Mammary epithelial cell (primary cell): ENCODE measurements at regions of chr7 and their contacts with region 1.

Region 1: GRCh38 chr7:135801045-135801693 is 52.6 kb upstream of the FAM180A start:
- DNase-seq: peak; percentile 51
- H3K4me3 ChIP-seq: no peak overlapping the region
- H3K27ac ChIP-seq: no peak overlapping the region
- H3K4me1 ChIP-seq: peaks cover 11% of the 10 kb centered on the region
- H3K27me3 ChIP-seq: no peaks in the 10 kb centered on the region
- CTCF ChIP-seq: peak; percentile 86 to 87

Region 2: DNA sequence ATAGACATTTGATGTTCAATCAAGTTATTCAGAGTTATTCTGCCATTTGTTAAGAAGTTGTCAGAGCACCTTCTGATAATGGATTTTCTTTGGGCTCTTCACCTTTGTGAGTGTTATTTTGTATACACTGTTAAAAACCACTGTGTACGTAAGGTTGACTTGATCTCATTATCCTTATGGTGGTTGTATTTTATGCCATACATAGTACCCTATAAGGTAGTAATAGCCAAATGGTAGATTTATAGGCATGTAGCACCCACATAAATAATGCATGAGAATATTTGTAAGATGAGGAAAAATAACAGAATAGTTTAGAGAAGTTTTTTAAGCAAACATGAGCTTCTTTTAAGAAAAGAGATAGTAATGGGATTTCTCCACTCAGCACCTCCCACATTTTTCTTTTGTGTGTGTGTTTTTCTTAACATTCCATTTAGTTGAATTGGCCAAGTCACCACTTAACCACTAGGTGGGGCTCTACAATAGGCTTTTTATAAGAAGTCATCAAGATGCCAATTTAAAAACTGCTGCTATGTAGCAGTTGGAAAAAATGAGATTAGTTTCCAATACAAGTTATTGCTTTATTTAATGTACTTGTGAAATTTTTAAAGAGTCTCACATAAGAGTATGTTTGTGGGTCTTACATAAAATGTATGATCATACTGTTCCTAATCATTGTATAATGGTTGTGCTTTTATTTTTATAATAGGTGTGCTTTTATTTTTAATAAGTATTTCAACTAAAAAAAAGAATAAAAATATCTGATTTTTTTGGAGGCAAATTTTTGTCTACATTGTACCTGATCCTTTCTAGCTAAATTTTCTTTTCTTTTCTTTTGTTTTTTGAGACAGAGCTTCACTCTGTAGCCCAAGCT is 180.0 kb before region 1 on chr7:
- CTCF ChIA-PET with region 1: no interaction called
- dilution Hi-C with region 1: no loop called
- in situ Hi-C with region 1: no loop called
- intact Hi-C with region 1: loop called (anchors 1 kb)
- DNase-seq: peak; percentile 73
- H3K4me3 ChIP-seq: no peak overlapping the region
- H3K27ac ChIP-seq: peak overlapping the region; percentile 57
- H3K4me1 ChIP-seq: no peaks in the 10 kb centered on the region
- H3K27me3 ChIP-seq: no peaks in the 10 kb centered on the region
- CTCF ChIP-seq: peak; percentile 80 to 90

Region 3: DNA sequence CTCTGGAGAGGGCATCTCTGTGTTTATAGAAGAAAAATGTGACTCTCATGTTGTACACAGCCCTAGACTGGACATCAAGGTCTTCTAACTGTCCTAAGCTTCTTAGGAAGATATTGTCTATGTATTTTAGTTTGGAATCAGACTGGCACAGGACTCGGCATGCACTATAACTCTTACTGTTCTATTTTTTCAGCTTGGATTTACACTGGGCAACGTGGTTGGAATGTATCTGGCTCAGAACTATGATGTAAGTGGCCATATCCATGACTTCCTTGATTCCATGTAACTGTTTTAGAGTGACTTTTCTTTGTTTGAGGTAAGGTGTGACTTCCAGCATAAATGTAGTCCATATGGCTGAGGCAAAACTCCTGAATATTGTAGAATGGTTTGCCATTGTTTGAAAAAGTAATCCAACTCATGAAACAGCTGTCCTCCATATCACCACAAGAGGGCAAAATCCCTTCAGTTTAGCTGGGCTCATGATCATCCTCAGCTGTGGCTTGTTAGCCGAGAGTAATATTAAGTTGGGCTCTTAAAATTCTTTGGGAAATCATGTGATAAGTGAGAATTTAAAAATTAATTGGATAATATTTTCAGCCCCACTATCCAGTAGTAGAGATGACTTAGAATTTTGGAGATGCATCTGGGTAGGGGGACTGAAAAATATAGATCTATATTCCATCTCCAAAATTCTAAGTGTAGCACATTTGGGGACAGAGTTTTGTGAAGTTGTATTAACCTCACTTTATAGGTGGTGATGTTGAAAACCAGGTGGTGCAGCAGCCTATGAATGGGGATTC is 128.4 kb before region 1 on chr7:
- CTCF ChIA-PET with region 1: interaction called, 4 read pairs
- dilution Hi-C with region 1: no loop called
- in situ Hi-C with region 1: loop called in 1 of 2 experiments (anchors 5 kb)
- intact Hi-C with region 1: loop called (anchors 1 kb)
- DNase-seq: peak; percentile 61
- H3K4me3 ChIP-seq: no peak overlapping the region
- H3K27ac ChIP-seq: peak overlapping the region; percentile 42
- H3K4me1 ChIP-seq: peaks cover 41% of the 10 kb centered on the region
- H3K27me3 ChIP-seq: no peaks in the 10 kb centered on the region
- CTCF ChIP-seq: peak; percentile 84 to 87

Region 4: GRCh38 chr7:135920478-135920877 is 119.3 kb after region 1 on chr7:
- CTCF ChIA-PET with region 1: no interaction called
- dilution Hi-C with region 1: no loop called
- in situ Hi-C with region 1: no loop called
- intact Hi-C with region 1: loop called (anchors 5 kb)
- DNase-seq: no peak
- H3K4me3 ChIP-seq: no peak overlapping the region
- H3K27ac ChIP-seq: no peak overlapping the region
- H3K4me1 ChIP-seq: peaks cover 23% of the 10 kb centered on the region
- H3K27me3 ChIP-seq: no peaks in the 10 kb centered on the region
- CTCF ChIP-seq: no peak

Region 5: DNA sequence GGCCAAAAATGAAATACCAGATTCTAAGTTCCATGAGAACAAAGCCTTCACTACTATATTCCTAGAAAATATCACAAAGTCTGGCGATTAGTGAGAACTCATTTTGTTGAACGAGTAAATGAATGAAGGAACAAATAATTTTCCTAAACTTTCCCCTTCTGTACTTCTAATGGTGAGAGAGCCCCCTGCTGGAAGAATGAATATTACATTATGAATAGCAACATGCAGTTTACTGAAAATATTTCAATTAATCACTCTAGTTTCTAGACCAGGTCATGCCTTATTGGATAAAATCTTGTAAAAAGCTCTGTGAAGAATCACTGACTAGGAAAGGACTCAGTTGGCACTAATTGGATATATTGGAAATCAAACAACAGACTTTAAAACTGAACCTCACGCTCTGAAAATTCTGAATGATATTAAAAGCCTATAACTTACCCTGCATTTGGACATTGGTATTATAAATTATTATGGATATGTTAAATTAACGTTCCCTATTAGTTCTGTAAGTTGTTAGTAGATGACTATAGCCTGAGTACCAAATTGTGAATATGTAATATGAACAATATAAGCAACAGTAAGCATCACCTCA is 208.4 kb after region 1 on chr7:
- CTCF ChIA-PET with region 1: interaction called, 3 read pairs
- dilution Hi-C with region 1: no loop called
- in situ Hi-C with region 1: loop called (anchors 5 kb)
- intact Hi-C with region 1: loop called (anchors 1 kb)
- DNase-seq: peak; percentile 17
- H3K4me3 ChIP-seq: no peak overlapping the region
- H3K27ac ChIP-seq: no peak overlapping the region
- H3K4me1 ChIP-seq: no peaks in the 10 kb centered on the region
- H3K27me3 ChIP-seq: no peaks in the 10 kb centered on the region
- CTCF ChIP-seq: peak; percentile 56 to 58

Region 6: GRCh38 chr7:136144182-136144581 is 343.0 kb after region 1 on chr7:
- CTCF ChIA-PET with region 1: no interaction called
- dilution Hi-C with region 1: no loop called
- in situ Hi-C with region 1: no loop called
- intact Hi-C with region 1: no loop called
- DNase-seq: no peak
- H3K4me3 ChIP-seq: no peak overlapping the region
- H3K27ac ChIP-seq: no peak overlapping the region
- H3K4me1 ChIP-seq: no peaks in the 10 kb centered on the region
- H3K27me3 ChIP-seq: no peaks in the 10 kb centered on the region
- CTCF ChIP-seq: no peak

Region 7: GRCh38 chr7:136405931-136406777 is 605.0 kb after region 1 on chr7:
- CTCF ChIA-PET with region 1: no interaction called
- dilution Hi-C with region 1: no loop called
- in situ Hi-C with region 1: no loop called
- intact Hi-C with region 1: loop called (anchors 5 kb)
- DNase-seq: peak; percentile 35
- H3K4me3 ChIP-seq: no peak overlapping the region
- H3K27ac ChIP-seq: no peak overlapping the region
- H3K4me1 ChIP-seq: no peaks in the 10 kb centered on the region
- H3K27me3 ChIP-seq: no peaks in the 10 kb centered on the region
- CTCF ChIP-seq: peak; percentile 61 to 79

Region 8: DNA sequence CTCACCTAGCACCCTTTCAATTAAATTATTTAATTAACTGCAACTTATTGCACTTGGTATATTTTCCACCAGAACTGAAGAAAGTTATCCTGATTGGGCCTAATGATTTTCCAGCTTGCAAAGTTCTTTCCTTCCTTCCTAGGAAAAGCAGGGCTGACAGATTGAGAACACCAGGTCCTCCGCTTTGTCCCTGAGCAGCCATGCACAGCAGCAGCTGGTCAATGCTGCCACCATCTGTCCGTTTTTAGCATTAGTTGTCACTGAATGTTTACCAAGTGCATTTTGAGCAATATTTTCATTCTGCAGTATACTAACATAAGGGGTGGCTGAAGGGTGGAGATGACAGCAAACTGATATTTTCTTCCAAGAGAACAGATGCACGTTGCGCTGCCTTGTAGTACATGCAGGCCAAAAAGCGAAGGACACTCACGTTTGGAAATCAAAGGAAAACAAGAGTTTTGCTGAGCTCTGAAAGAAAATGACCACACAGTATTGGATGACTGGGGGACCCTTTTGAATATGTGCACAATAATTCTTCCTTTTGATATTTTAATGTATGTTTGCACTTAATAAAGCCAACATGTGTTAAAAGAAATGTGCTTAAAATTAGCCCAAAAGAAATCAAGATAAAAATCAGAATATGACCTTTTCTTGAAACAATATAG is 1791.2 kb after region 1 on chr7:
- CTCF ChIA-PET with region 1: no interaction called
- dilution Hi-C with region 1: no loop called
- in situ Hi-C with region 1: no loop called
- intact Hi-C with region 1: loop called (anchors 5 kb)
- DNase-seq: peak; percentile 54
- H3K4me3 ChIP-seq: no peak overlapping the region
- H3K27ac ChIP-seq: no peak overlapping the region
- H3K4me1 ChIP-seq: peaks cover 12% of the 10 kb centered on the region
- H3K27me3 ChIP-seq: peaks cover under 1% of the 10 kb centered on the region
- CTCF ChIP-seq: peak; percentile 92 to 96